Cardiac septum (tissue), 1 donor: ENCODE measurements at regions of chr19 and their contacts with region 1.

Region 1: DNA sequence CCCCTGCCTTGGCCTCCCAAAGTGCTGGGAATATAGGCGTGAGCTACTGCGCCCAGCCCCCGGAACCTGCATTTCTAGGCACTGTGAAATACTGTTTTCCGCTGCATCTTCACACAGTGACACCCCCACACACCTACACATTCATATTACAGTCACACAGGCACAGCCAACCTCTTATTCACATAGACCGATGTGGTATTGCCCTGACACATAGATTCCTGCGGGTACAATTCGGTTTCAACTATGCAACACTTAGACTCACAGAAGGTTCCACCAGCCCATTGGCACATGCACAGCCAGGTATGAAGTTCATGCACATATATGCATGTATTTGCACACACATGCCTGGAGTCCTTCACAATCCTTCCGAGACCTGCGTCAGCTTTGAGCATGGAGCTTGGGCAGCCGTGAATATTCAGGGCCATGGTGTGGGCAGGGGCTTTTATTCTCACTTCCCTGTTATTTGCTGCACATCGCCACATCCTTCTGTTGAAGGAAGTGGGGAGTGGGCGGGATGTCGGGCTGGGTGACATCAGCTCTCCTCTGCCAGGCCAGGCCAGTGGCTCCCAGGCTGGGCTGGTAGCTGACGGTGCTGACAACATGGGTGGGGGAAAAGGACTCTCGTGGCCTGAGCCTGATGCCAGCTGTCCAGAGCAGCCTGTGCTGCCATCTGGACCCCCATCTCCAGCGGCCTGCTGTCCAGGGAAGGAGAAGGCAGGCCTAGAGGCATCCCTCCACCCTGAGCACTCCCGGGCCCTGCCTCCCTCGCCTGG is 5.4 kb upstream of the CDC37 start:
- DNase-seq: no peak

Region 2: GRCh38 chr19:10142701-10143375 is 265.9 kb before region 1 on chr19:
- intact Hi-C with region 1: no loop called
- DNase-seq: no peak

Region 3: DNA sequence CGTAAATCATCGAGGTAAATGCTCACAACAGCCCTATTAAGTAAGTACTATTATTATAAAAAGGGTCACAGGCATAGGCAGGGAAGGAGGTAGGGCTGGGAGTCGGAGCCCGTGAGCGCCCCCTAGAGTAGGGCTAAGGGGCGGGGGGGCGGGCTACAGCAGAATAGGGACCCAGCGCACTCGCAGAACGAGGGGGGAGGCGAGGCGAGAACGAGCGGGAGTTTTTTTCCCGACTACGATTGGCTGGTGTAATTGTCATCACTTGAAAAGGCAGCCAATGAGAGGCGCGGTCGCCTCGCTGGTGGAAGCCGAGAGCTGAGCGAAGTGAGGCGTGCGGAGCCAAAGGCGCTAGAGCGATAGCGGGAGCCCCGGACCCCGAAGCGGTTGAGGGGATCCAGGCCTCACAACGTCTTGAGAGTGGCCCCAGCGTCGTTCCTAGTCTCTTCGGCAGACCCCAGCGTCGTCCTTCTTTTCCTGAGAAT is 70.2 kb after region 1 on chr19:
- intact Hi-C with region 1: loop called (anchors 5 kb)
- DNase-seq: peak; percentile 94

Region 4: GRCh38 chr19:10643968-10644259 is 235.2 kb after region 1 on chr19:
- intact Hi-C with region 1: no loop called
- DNase-seq: no peak